Right ventricle myocardium inferior (tissue), 1 donor: ENCODE measurements at regions of chr1 and their contacts with region 1.

Region 1: GRCh38 chr1:70221241-70222121 is at the start of gene SRSF11:
- DNase-seq: peak; percentile 98
- ATAC-seq: peak; percentile 100
- total RNA-seq, gene SRSF11: 49.4 TPM

Region 2: GRCh38 chr1:70017770-70018169 is 203.7 kb before region 1 on chr1:
- intact Hi-C with region 1: no loop called
- DNase-seq: no peak
- ATAC-seq: no peak

Region 3: GRCh38 chr1:70205434-70206118 is 15.9 kb before region 1 on chr1 and contains the start of gene LRRC40:
- intact Hi-C with region 1: loop called (anchors 2 kb)
- DNase-seq: peak; percentile 98
- ATAC-seq: peak; percentile 100
- total RNA-seq, gene LRRC40: 10.5 TPM

Region 4: DNA sequence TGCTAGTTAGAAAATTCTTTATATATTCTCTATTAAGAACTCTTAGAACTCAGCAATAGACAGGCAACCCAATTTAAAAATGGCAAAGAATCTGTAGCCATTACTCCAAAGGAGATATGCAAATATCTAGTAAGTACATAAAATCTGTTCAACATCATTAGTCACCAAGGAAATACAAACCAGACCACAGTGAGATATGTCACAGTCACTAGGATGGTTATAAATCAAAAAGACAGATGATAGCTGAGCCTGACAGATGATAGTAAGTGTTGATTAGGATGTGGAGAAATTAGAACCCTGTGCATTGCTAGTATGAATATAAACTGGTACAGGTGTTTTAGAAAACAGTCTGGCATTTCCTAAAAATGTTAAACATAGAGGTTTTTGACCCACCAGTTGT is 26.3 kb after region 1 on chr1:
- intact Hi-C with region 1: no loop called
- DNase-seq: no peak
- ATAC-seq: no peak

Region 5: GRCh38 chr1:70264839-70265238 is 43.4 kb after region 1 on chr1:
- intact Hi-C with region 1: no loop called
- DNase-seq: no peak
- ATAC-seq: peak; percentile 63

Region 6: GRCh38 chr1:70354332-70355110 is 133.0 kb after region 1 on chr1 and contains the start of gene ANKRD13C:
- intact Hi-C with region 1: loop called (anchors 2 kb)
- DNase-seq: peak; percentile 94
- ATAC-seq: peak; percentile 98
- total RNA-seq, gene ANKRD13C: 9.4 TPM